ENCODE measurements at regions of chr5 and their contacts with region 1.

Region 1: GRCh38 chr5:153964880-153965645 is 73.6 kb downstream of the FAM114A2 start:
- DNase-seq: peak; percentile 52
- H3K4me3 ChIP-seq: no peak overlapping the region
- H3K27ac ChIP-seq: no peak overlapping the region
- H3K4me1 ChIP-seq: no peaks in the 10 kb centered on the region
- H3K27me3 ChIP-seq: no peaks in the 10 kb centered on the region
- CTCF ChIP-seq: peak; percentile 79 to 80
- POLR2A ChIP-seq: no peak

Region 2: DNA sequence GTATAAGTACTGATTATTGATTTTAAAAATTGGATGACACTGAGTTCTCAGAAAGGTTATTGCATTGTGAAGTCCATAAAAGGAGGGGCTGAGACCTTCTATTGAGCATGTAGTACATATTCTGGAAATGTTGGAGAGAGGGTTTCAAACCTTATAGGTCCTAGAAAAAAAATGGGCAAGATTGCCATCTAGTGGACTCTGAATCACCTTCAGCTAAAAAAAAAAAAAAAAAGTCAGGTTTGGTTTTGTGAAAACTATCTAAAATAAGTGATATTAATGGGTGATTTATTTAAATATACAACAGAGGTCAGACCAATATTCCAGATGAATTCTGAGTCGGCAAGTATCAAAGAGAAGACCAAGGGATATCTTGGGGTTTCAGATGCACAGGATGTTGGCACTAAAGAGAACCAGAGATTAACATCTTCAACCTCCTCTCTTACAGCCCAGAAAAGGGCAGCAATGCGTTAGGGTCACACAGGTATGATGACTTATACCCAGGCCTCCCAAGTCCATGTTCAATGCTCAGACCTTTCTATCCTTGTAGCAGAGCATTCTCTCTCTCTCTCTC is 1450.2 kb before region 1 on chr5:
- CTCF ChIA-PET with region 1: interaction called, 19 read pairs
- POLR2A ChIA-PET with region 1: no interaction called
- dilution Hi-C with region 1: no loop called
- intact Hi-C with region 1: no loop called
- DNase-seq: peak; percentile 16
- H3K4me3 ChIP-seq: no peak overlapping the region
- H3K27ac ChIP-seq: no peak overlapping the region
- H3K4me1 ChIP-seq: no peaks in the 10 kb centered on the region
- H3K27me3 ChIP-seq: no peaks in the 10 kb centered on the region
- CTCF ChIP-seq: peak in 1 of 2 donors; percentile 34
- POLR2A ChIP-seq: no peak

Region 3: GRCh38 chr5:152560512-152561137 is 1404.4 kb before region 1 on chr5:
- CTCF ChIA-PET with region 1: interaction called, 94 read pairs
- POLR2A ChIA-PET with region 1: no interaction called
- dilution Hi-C with region 1: no loop called
- intact Hi-C with region 1: loop called (anchors 1 kb)
- DNase-seq: peak; percentile 24
- H3K4me3 ChIP-seq: no peak overlapping the region
- H3K27ac ChIP-seq: no peak overlapping the region
- H3K4me1 ChIP-seq: no peaks in the 10 kb centered on the region
- H3K27me3 ChIP-seq: no peaks in the 10 kb centered on the region
- CTCF ChIP-seq: peak; percentile 57 to 63
- POLR2A ChIP-seq: no peak

Region 4: GRCh38 chr5:153711755-153712154 is 253.3 kb before region 1 on chr5:
- CTCF ChIA-PET with region 1: interaction called, 10 read pairs
- POLR2A ChIA-PET with region 1: no interaction called
- dilution Hi-C with region 1: no loop called
- intact Hi-C with region 1: no loop called
- DNase-seq: peak; percentile 7
- H3K4me3 ChIP-seq: no peak overlapping the region
- H3K27ac ChIP-seq: no peak overlapping the region
- H3K4me1 ChIP-seq: no peaks in the 10 kb centered on the region
- H3K27me3 ChIP-seq: no peaks in the 10 kb centered on the region
- CTCF ChIP-seq: peak in 1 of 2 donors; percentile 15
- POLR2A ChIP-seq: no peak

Region 5: GRCh38 chr5:155441849-155442248 is 1476.8 kb after region 1 on chr5:
- CTCF ChIA-PET with region 1: no interaction called
- POLR2A ChIA-PET with region 1: no interaction called
- dilution Hi-C with region 1: no loop called
- intact Hi-C with region 1: no loop called
- DNase-seq: no peak
- H3K4me3 ChIP-seq: no peak overlapping the region
- H3K27ac ChIP-seq: no peak overlapping the region
- H3K4me1 ChIP-seq: no peaks in the 10 kb centered on the region
- H3K27me3 ChIP-seq: no peaks in the 10 kb centered on the region
- CTCF ChIP-seq: no peak
- POLR2A ChIP-seq: no peak